ENCODE measurements at regions of chr5 and their contacts with region 1.

Region 1: DNA sequence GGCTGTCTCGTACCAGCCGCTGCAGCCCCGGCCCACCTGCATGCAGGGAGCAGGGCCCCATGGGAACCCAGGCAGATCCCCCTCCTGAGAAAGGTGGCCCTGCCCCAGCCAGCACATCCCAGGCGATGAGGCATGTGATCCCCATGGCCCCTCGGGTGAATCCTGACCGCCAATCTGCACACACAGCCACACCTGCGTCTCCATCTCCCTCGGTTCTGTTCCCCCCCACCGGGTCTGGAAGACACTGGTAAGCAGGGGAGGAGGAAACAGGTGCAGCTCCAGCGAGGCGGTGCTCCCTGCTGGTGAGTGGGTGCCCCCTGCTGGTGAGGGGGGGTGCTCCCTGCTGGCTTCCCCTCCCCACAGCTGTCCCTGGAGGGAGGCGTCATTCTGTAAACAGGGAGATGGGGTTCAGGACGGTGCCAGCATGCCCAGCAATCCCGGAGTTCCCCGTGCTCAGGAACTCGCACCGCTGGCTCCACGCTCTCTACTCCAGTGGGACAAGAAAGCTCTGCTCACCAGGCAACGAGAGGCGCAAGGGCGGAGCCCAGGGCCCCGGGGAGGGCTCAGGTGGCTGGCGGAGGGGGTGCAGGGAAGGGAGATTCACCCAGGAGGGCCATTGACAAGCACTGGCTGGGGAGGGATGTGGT is 28.4 kb upstream of the SLC12A7 start:
- DNase-seq: peak; percentile 87
- H3K4me3 ChIP-seq: no peak overlapping the region
- H3K27ac ChIP-seq: no peak overlapping the region
- H3K4me1 ChIP-seq: no peaks in the 10 kb centered on the region; a peak in 1 of 4 replicates
- H3K27me3 ChIP-seq: no peaks in the 10 kb centered on the region
- CTCF ChIP-seq: peak; percentile 62
- EP300 ChIP-seq: no peak
- RAD21 ChIP-seq: peak; percentile 75

Region 2: GRCh38 chr5:923281-923873 is 216.9 kb before region 1 on chr5:
- CTCF ChIA-PET with region 1: interaction called, 27 read pairs
- POLR2A ChIA-PET with region 1: no interaction called
- DNase-seq: peak; percentile 94
- H3K4me3 ChIP-seq: peak overlapping the region in 1 of 2 experiments; percentile 7; a peak in 1 of 4 replicates
- H3K27ac ChIP-seq: no peak overlapping the region
- H3K4me1 ChIP-seq: no peaks in the 10 kb centered on the region
- H3K27me3 ChIP-seq: no peaks in the 10 kb centered on the region
- CTCF ChIP-seq: peak; percentile 83
- EP300 ChIP-seq: no peak
- RAD21 ChIP-seq: peak; percentile 91

Region 3: DNA sequence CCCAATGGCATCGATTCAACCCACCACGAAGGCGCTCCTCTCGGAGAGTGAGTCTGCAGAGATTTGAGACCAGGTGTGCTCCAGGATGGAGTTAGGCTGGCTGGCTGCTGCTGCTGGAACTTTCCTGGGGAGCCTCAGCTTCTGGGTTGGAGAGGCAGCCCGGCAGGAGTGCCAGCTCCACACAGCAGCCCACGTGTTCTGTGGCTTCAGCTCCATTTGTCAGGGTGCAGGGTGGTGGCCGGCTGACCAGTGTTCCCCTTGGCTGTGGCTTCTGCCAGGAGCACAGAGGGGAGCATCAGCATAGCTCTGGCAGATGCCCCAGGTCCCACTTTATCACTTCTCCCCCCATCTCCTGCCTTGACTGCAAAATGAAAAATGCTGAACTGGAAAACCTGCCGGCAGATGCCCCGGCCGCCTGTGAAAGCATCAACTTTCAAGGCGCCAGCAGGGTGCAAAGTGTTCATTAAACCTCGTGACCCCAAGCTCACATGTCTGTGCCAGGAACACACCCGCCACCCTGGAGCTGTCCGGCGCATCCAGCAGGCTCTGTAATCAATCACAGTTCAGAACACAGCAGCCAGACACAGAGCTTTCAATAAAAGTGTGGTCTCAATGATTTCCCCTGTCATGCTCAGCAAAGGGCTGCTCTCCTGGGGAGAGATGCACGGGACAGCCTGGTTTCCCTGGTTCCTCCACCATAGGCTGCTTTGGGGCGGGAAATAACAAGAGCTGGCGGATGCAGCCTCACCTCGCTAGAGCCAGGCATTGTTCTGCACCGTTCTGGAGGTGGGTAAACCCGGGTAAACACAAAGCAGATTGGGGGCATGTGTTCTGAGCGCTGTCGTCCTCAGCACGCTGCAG is 194.4 kb before region 1 on chr5:
- CTCF ChIA-PET with region 1: interaction called, 13 read pairs
- POLR2A ChIA-PET with region 1: no interaction called
- DNase-seq: peak; percentile 69
- H3K4me3 ChIP-seq: no peak overlapping the region; a peak in 1 of 4 replicates
- H3K27ac ChIP-seq: peak overlapping the region in 1 of 2 experiments; percentile 47; a peak in 2 of 4 replicates
- H3K4me1 ChIP-seq: peaks cover 0 to 36% of the 10 kb centered on the region in 2 experiments; a peak in 1 of 4 replicates
- H3K27me3 ChIP-seq: peaks cover 27% of the 10 kb centered on the region
- CTCF ChIP-seq: no peak
- EP300 ChIP-seq: no peak
- RAD21 ChIP-seq: no peak

Region 4: GRCh38 chr5:1052641-1053390 is 87.5 kb before region 1 on chr5:
- CTCF ChIA-PET with region 1: interaction called, 14 read pairs
- POLR2A ChIA-PET with region 1: no interaction called
- DNase-seq: peak; percentile 44
- H3K4me3 ChIP-seq: no peak overlapping the region
- H3K27ac ChIP-seq: no peak overlapping the region
- H3K4me1 ChIP-seq: peaks cover 0 to 3% of the 10 kb centered on the region in 2 experiments; a peak in 1 of 4 replicates
- H3K27me3 ChIP-seq: no peaks in the 10 kb centered on the region
- CTCF ChIP-seq: no peak
- EP300 ChIP-seq: no peak
- RAD21 ChIP-seq: no peak

Region 5: GRCh38 chr5:1101961-1102713 is 38.2 kb before region 1 on chr5:
- CTCF ChIA-PET with region 1: no interaction called
- POLR2A ChIA-PET with region 1: no interaction called
- DNase-seq: no peak
- H3K4me3 ChIP-seq: no peak overlapping the region
- H3K27ac ChIP-seq: no peak overlapping the region
- H3K4me1 ChIP-seq: peaks cover 0 to 4% of the 10 kb centered on the region in 2 experiments; a peak in 1 of 4 replicates
- H3K27me3 ChIP-seq: no peaks in the 10 kb centered on the region
- CTCF ChIP-seq: no peak
- EP300 ChIP-seq: no peak
- RAD21 ChIP-seq: no peak

Region 6: DNA sequence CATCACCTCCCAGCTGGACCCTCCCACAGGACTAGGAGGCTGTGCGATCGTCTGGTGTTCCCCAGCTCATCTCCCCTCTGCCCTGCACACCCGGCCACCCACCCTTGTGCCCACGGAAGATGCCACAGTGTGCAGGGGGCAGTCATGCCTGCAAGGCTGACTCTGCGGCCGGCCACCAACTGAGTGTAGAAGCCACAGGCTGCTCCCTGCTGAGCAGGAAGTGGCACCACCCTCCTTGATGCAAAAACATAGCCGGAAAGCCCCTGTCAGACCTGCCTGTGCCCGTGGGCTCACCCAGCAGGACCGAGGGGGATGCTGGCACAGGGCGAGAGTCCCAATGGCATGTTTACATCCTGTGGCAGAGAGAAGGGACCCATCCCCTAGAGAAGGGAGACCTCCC is 11.9 kb after region 1 on chr5:
- CTCF ChIA-PET with region 1: interaction called, 25 read pairs
- POLR2A ChIA-PET with region 1: no interaction called
- DNase-seq: no peak
- H3K4me3 ChIP-seq: no peak overlapping the region
- H3K27ac ChIP-seq: no peak overlapping the region
- H3K4me1 ChIP-seq: no peaks in the 10 kb centered on the region; a peak in 1 of 4 replicates
- H3K27me3 ChIP-seq: peaks cover 16% of the 10 kb centered on the region
- CTCF ChIP-seq: no peak
- EP300 ChIP-seq: no peak
- RAD21 ChIP-seq: no peak